Dendritic cell treated with granulocyte-macrophage colony-stimulating factor and Interleukin-4, amounts not matched to agents 40 ng/mL and 50 ng/mL, for 4 days (primary cell): ENCODE measurements at regions of chr16 and their contacts with region 1.

Region 1: DNA sequence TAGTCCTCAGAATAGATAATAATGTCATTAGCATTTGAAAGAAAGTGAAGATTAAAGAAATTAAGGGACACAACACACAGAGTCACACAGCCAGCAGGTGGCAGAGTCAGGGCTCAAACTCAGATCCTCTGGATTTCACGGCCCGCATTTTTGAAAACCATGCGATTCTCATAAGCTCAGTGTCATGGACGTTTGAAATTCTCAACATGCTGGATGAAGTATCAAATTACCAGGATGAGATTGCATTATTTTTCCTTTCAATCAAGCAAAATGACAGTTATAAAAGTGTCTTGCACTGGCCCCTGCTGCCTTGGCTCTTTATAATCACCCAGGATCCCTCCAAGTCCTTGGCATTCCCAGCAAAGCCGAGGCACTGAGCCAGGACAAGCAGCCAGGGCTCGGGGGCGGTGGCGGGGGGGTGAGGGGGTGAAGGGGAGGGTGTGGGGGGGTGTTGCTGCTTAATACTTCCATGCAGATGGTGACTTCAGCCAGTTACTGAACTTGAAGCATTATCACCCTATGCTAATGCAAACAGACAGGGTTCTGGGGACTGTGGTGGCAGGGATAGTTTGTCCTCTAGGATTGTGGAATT is 6.6 kb upstream of the BMERB1 start:
- H3K4me3 Mint-ChIP-seq: no peak overlapping the region
- H3K27ac Mint-ChIP-seq: no peak overlapping the region
- H3K4me1 Mint-ChIP-seq: no peaks in the 10 kb centered on the region
- H3K27me3 Mint-ChIP-seq: peaks cover 13% of the 10 kb centered on the region

Region 2: DNA sequence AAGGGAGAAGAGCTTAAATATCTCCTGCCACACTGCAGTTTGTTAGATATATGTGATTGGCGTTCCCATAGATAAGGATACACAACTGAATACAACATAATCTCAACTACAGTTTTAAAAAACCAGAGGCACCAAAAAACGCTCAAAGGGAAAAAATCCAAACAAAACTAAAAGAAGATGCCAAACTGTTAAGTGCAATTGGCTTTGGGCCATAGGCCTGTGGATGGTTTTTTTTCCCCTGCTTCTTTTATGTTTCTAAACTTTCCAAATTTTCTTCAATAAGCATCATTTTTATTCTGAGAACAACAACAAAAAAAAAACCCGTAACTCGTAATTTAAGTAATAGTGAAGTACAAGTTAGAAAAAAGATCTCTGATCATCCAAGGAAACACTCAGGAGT is 193.1 kb after region 1 on chr16:
- intact Hi-C with region 1: loop called (anchors 10 kb)
- H3K4me3 Mint-ChIP-seq: no peak overlapping the region
- H3K27ac Mint-ChIP-seq: no peak overlapping the region
- H3K4me1 Mint-ChIP-seq: peaks cover 8% of the 10 kb centered on the region
- H3K27me3 Mint-ChIP-seq: no peaks in the 10 kb centered on the region

Region 3: DNA sequence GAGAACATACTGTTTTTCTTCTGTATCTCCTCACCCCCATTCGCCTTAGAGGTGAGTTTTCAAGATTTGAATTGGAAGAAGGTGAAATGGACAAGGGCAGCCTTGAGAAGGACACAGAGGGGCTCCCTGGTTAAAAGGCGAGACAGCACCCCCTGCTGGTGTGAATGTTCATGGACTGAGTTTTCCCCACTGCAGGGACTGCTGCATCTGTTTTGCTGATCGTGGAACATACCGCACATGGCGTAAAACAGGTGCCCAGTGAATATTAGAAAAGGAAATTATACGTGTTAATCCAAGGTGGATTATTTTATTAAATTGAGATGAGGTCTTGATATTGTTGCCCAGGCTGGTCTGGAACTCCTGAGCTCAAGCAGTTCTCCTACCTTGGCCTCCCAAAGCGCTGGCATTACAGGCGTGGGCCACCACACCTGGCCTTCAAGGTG is 276.8 kb after region 1 on chr16:
- intact Hi-C with region 1: loop called (anchors 1 kb)
- H3K4me3 Mint-ChIP-seq: no peak overlapping the region
- H3K27ac Mint-ChIP-seq: no peak overlapping the region
- H3K4me1 Mint-ChIP-seq: peaks cover 17% of the 10 kb centered on the region
- H3K27me3 Mint-ChIP-seq: no peaks in the 10 kb centered on the region